MCF 10A (cell line): ENCODE measurements at regions of chr14 and their contacts with region 1.

Region 1: GRCh38 chr14:51283402-51284085 is 43.5 kb downstream of the TMX1 start:
- DNase-seq: peak; percentile 84
- H3K4me3 Mint-ChIP-seq: no peak overlapping the region
- H3K27ac Mint-ChIP-seq: no peak overlapping the region
- H3K4me1 Mint-ChIP-seq: peaks cover 12% of the 10 kb centered on the region
- H3K27me3 Mint-ChIP-seq: no peaks in the 10 kb centered on the region
- CTCF ChIP-seq: peak; percentile 80

Region 2: GRCh38 chr14:51547260-51547659 is 263.7 kb after region 1 on chr14:
- CTCF ChIA-PET with region 1: no interaction called
- POLR2A ChIA-PET with region 1: interaction called, 7 read pairs
- intact Hi-C with region 1: loop called (anchors 5 kb)
- DNase-seq: peak; percentile 99
- H3K4me3 Mint-ChIP-seq: peak overlapping the region; percentile 46
- H3K27ac Mint-ChIP-seq: peak overlapping the region; percentile 94
- H3K4me1 Mint-ChIP-seq: peaks cover 45% of the 10 kb centered on the region
- H3K27me3 Mint-ChIP-seq: no peaks in the 10 kb centered on the region
- CTCF ChIP-seq: no peak

Region 3: GRCh38 chr14:51716610-51717009 is 433.1 kb after region 1 on chr14:
- CTCF ChIA-PET with region 1: interaction called, 10 read pairs
- POLR2A ChIA-PET with region 1: no interaction called
- intact Hi-C with region 1: loop called (anchors 1 kb)
- DNase-seq: peak; percentile 65
- H3K4me3 Mint-ChIP-seq: no peak overlapping the region
- H3K27ac Mint-ChIP-seq: peak overlapping the region; percentile 47
- H3K4me1 Mint-ChIP-seq: peaks cover 11% of the 10 kb centered on the region
- H3K27me3 Mint-ChIP-seq: no peaks in the 10 kb centered on the region
- CTCF ChIP-seq: no peak